Activated B cell treated with CpG ODN at 0.5 μM for 24 hours (primary cell): ENCODE measurements at regions of chr3 and their contacts with region 1.

Region 1: DNA sequence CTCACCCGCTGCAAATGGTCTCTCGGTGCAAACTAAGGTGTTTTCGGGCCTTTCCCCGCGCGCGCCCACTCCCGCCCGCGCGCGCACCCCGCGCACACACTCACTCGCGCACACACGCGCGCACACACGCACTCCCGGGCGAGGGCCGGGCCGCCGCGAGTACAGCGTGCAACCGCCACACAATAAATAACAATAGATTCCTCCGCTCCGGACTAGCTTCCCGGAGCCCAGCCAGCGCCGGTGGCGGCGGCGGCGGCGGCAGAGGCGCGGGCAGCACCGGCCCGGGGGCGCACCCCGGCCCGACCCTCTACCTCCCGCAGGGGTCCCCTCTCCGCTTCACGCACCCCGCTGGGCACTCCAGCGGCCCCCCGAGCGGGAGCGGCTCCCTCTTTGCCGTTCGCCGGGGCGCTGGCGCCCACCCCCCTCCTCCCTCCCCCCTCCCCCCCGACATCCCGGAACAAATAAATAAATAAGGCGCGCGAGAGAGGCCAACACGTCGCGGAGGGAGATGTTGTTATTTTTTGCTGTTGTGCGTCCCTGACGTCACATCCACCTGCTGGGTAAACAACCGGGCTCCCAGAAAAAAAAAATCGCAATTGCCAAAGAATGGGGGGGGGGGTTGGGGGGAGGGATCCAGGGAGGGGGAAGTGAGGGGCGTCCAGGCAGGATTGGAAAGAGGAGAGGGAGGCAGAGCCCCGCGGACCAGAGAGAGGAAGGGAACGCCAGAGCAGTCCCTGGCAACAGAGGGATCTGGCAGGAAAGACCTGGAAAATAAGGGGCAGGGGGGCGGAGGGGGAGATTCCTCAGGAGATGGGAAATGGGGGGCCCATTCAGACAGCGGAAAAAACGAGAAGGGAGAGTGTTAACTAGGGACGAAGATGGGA is at the start of gene FOXP1:
- DNase-seq: peak; percentile 59
- ATAC-seq: peak; percentile 30
- H3K4me3 Mint-ChIP-seq: peak within 1 kb of the TSS; percentile 92
- H3K27ac Mint-ChIP-seq: peak within 1 kb of the TSS; percentile 93
- H3K4me1 Mint-ChIP-seq: peaks cover 53% of the 10 kb centered on the region
- H3K27me3 Mint-ChIP-seq: no peaks in the 10 kb centered on the region
- CTCF ChIP-seq: no peak
- total RNA-seq, gene FOXP1: 491 and 563 TPM in 2 replicates

Region 2: DNA sequence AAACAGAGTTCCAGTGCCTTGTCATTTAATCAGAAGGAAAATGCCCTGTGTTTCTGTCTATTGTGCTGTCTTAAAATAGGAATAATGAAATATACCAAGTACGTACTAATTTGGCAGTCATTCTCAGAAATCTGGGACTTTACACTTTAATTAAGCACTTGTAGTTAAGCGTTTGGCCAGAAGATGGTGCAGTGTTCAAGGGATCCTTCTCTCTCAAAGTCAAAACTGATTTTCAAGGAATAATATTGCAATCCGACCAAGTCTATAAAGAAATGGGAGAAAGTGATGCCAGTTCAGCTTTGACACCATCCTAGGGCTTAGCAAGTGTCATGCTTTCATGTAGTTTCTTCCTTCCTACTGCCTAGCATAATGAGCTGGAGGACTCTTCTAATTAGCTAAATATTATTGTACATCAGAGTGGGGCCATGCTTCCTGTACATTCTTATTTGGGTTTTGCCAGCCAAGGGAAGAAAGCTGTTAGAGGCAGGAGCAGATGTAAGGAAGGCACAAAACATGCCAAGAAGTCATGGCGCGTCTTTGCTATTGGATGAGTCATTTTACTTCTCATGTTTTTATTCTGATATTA is 1519.5 kb before region 1 on chr3:
- CTCF ChIA-PET with region 1: no interaction called
- POLR2A ChIA-PET with region 1: no interaction called
- intact Hi-C with region 1: loop called (anchors 1 kb)
- DNase-seq: no peak
- ATAC-seq: no peak
- H3K4me3 Mint-ChIP-seq: no peak overlapping the region
- H3K27ac Mint-ChIP-seq: no peak overlapping the region
- H3K4me1 Mint-ChIP-seq: no peaks in the 10 kb centered on the region
- H3K27me3 Mint-ChIP-seq: peaks cover 2% of the 10 kb centered on the region
- CTCF ChIP-seq: peak; percentile 79

Region 3: GRCh38 chr3:70771426-70772147 is 812.2 kb before region 1 on chr3:
- CTCF ChIA-PET with region 1: no interaction called
- POLR2A ChIA-PET with region 1: no interaction called
- intact Hi-C with region 1: loop called (anchors 10 kb)
- DNase-seq: no peak
- ATAC-seq: peak; percentile 14
- H3K4me3 Mint-ChIP-seq: no peak overlapping the region
- H3K27ac Mint-ChIP-seq: no peak overlapping the region
- H3K4me1 Mint-ChIP-seq: peaks cover 3% of the 10 kb centered on the region
- H3K27me3 Mint-ChIP-seq: peaks cover 12% of the 10 kb centered on the region
- CTCF ChIP-seq: no peak

Region 4: DNA sequence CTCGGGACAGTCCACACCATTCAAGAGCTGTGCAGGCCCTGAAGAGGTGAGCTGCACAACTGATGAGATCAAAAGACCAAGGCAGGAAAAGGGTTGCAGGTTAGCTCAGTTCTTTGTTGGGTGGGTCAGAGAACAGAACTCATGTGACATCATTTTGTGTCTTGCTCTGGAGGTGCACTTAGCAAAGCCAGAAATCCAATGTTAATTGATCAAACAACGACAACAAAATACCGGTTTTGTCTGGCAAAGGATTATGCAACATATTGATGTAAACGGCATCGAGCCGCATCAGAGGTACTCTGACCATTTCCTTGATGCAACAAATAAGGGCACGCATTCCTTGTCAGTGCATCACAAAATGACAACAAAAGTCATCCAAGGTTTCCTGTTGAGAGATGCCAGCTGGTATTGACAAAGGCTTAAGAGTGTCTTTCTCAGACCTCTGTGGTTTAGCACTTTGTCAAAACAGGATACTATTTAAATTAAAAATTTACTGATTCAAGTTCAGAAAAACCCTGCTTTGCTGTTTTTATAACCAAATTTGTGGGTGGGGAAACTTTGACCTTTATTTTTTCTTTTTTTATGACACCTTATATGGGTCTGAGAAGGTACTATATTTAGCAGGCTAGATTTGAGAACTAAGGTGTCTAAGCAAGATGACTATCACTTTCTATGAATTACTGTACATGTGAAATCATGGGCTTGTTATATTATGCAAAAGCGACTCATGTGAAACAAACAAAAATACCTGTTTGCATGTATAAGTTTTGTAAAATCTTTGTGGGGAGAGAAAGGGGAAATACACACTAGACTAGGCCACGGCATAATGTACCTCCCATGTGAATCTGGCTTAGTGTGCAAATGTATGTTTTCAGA is 496.4 kb before region 1 on chr3:
- CTCF ChIA-PET with region 1: no interaction called
- POLR2A ChIA-PET with region 1: interaction called, 92 read pairs
- intact Hi-C with region 1: loop called (anchors 1 kb)
- DNase-seq: no peak
- ATAC-seq: peak; percentile 56
- H3K4me3 Mint-ChIP-seq: peak overlapping the region; percentile 54
- H3K27ac Mint-ChIP-seq: peak overlapping the region; percentile 99
- H3K4me1 Mint-ChIP-seq: peaks cover 97% of the 10 kb centered on the region
- H3K27me3 Mint-ChIP-seq: no peaks in the 10 kb centered on the region
- CTCF ChIP-seq: no peak

Region 5: GRCh38 chr3:71360764-71361163 is 223.0 kb before region 1 on chr3:
- CTCF ChIA-PET with region 1: no interaction called
- POLR2A ChIA-PET with region 1: interaction called, 20 read pairs
- intact Hi-C with region 1: no loop called
- DNase-seq: no peak
- ATAC-seq: peak; percentile 62
- H3K4me3 Mint-ChIP-seq: peak overlapping the region; percentile 81
- H3K27ac Mint-ChIP-seq: peak overlapping the region; percentile 93
- H3K4me1 Mint-ChIP-seq: peaks cover 88% of the 10 kb centered on the region
- H3K27me3 Mint-ChIP-seq: no peaks in the 10 kb centered on the region
- CTCF ChIP-seq: no peak

Region 6: DNA sequence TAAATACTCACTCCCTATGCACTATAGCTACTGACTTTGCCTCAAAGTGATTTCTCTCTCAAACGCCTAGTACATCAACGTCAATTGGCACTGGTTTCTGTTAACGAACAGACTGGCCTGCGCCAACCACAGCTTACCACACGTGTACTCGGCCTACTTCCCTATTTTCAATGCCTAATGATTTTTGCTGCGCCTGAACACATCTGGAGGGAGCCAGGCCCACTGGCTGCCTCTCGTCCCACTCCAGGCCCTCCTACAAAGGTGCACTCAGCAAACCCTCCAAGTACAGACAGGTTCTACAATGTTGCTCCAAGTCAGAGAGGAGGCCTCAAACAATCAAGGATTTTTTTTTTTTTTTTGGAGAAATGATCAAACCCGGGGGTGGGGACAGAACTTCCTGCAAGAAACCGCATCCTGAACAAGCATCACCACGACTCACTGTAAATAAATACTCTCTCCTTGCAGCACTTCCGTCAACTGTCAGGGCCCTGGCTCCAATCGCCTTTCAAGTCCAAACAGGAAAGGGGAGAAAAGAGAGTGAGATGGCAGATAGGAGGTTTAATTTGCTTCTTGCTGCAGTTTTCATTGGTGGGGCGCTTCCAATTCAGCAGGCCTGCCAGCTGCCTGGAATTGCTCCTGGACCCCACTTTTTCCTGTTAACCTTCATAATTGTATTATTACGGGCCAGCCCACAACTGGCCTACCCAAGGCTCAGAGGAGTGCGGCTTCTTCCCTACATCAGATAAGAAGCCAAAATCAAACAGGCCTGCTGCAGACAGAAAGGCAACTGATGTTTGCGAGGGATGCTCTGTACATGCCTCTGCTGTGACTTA is 139.6 kb before region 1 on chr3:
- CTCF ChIA-PET with region 1: no interaction called
- POLR2A ChIA-PET with region 1: interaction called, 41 read pairs
- intact Hi-C with region 1: loop called (anchors 1 kb)
- DNase-seq: peak; percentile 62
- ATAC-seq: peak; percentile 80
- H3K4me3 Mint-ChIP-seq: peak overlapping the region; percentile 78
- H3K27ac Mint-ChIP-seq: peak overlapping the region; percentile 99
- H3K4me1 Mint-ChIP-seq: peaks cover 93% of the 10 kb centered on the region
- H3K27me3 Mint-ChIP-seq: no peaks in the 10 kb centered on the region
- CTCF ChIP-seq: no peak

Region 7: GRCh38 chr3:71542521-71543370 is 41.1 kb before region 1 on chr3:
- CTCF ChIA-PET with region 1: no interaction called
- POLR2A ChIA-PET with region 1: interaction called, 21 read pairs
- intact Hi-C with region 1: loop called (anchors 2 kb)
- DNase-seq: no peak
- ATAC-seq: peak; percentile 77
- H3K4me3 Mint-ChIP-seq: peak overlapping the region; percentile 56
- H3K27ac Mint-ChIP-seq: peak overlapping the region; percentile 68
- H3K4me1 Mint-ChIP-seq: peaks cover 38% of the 10 kb centered on the region
- H3K27me3 Mint-ChIP-seq: no peaks in the 10 kb centered on the region
- CTCF ChIP-seq: no peak

Region 8: DNA sequence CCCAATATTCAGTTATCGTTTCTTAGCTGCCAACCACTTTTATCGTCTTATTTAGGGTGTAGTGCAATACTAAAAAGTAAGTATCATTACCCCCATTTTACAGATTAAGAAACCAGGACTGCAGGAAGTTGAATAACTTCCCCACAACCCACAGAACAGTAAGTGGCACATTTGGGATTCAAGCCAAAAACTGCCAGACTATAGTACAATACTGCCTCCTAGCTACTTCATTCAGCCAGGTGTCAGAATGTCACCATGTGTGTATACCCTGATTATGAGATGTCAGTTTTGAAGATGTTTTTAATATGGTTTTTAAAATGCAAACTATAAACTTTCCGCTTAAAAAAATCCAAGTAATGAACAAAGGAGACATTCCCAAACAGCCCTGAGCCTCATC is 275.3 kb after region 1 on chr3:
- CTCF ChIA-PET with region 1: no interaction called
- POLR2A ChIA-PET with region 1: no interaction called
- intact Hi-C with region 1: no loop called
- DNase-seq: no peak
- ATAC-seq: no peak
- H3K4me3 Mint-ChIP-seq: no peak overlapping the region
- H3K27ac Mint-ChIP-seq: no peak overlapping the region
- H3K4me1 Mint-ChIP-seq: no peaks in the 10 kb centered on the region
- H3K27me3 Mint-ChIP-seq: peaks cover 59% of the 10 kb centered on the region
- CTCF ChIP-seq: no peak